Activated T-helper 1 cell treated with anti-CD3 and anti-CD28 coated beads, Interleukin-12 subunit alpha, Interleukin-12 subunit beta, Interleukin-2, Interleukin-4 antibody, amounts not matched to agents 30 ng/mL and 10 ng/mL and 1 ng/mL, durations not matched to agents 14 hours and 24 hours and 36 hours (primary cell): ENCODE measurements at regions of chr11 and their contacts with region 1.

Region 1: GRCh38 chr11:46616998-46617675 is at the starts of genes ATG13 and HARBI1:
- DNase-seq: peak; percentile 91
- H3K4me3 Mint-ChIP-seq: peak within 1 kb of the TSS; percentile 89
- H3K27ac Mint-ChIP-seq: peak within 1 kb of the TSS; percentile 100
- H3K4me1 Mint-ChIP-seq: peaks cover 46% of the 10 kb centered on the region
- H3K27me3 Mint-ChIP-seq: no peaks in the 10 kb centered on the region
- total RNA-seq, gene ATG13: 66.4 and 73.8 TPM in 2 replicates
- total RNA-seq, gene HARBI1: 4.5 and 5.3 TPM in 2 replicates

Region 2: DNA sequence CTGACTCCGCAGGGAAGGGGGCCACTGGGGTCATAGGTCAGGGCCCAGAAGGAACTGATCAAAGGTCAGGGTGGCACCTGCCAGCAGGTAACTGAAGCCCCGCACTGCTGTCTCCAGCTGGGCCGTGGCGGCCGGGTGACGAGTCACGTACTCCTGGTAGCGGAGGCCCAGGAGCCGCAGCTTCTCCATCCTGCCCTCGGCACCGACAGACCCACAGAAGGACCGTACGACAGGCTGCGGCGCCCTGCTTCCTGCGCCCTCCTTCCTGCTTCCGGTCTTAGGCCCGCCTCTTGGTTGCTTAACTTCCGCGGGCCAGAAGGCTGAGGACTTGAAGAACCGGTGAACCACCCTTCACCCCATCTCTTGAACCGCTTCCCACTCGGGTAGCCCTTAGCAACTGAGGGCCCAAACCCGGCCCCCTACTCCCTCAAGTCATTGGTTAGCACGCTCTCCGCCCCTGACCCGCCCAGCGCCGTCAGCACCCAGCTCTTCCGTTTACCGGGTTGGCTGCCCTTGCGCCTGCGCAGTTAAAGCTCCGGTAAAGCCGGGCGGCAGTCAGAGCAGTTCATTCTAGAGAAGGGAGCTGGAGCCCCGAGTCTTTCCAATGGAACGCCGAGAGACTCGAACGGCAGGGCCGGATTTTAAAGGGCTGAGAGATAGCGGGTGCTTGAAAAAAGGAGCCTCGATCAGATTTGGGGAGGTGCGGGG is 699.4 kb before region 1 on chr11 and contains the start of gene PEX16:
- intact Hi-C with region 1: loop called (anchors 2 kb)
- DNase-seq: peak; percentile 97
- H3K4me3 Mint-ChIP-seq: peak within 1 kb of the TSS; percentile 98
- H3K27ac Mint-ChIP-seq: peak within 1 kb of the TSS; percentile 92
- H3K4me1 Mint-ChIP-seq: peaks cover 22% of the 10 kb centered on the region
- H3K27me3 Mint-ChIP-seq: peaks cover 10% of the 10 kb centered on the region
- total RNA-seq, gene PEX16: 37.4 and 44.6 TPM in 2 replicates

Region 3: GRCh38 chr11:46346886-46347636 is 270.1 kb before region 1 on chr11 and contains the start of gene DGKZ:
- intact Hi-C with region 1: loop called (anchors 2 kb)
- DNase-seq: peak; percentile 91
- H3K4me3 Mint-ChIP-seq: peak within 1 kb of the TSS; percentile 88
- H3K27ac Mint-ChIP-seq: peak within 1 kb of the TSS; percentile 89
- H3K4me1 Mint-ChIP-seq: peaks cover 72% of the 10 kb centered on the region
- H3K27me3 Mint-ChIP-seq: peaks cover 3% of the 10 kb centered on the region
- total RNA-seq, gene DGKZ: 101 TPM in 2 replicates

Region 4: GRCh38 chr11:46554205-46555055 is 62.7 kb before region 1 on chr11:
- intact Hi-C with region 1: loop called (anchors 2 kb)
- DNase-seq: no peak
- H3K4me3 Mint-ChIP-seq: peak overlapping the region; percentile 13
- H3K27ac Mint-ChIP-seq: peak overlapping the region; percentile 55
- H3K4me1 Mint-ChIP-seq: peaks cover 44% of the 10 kb centered on the region
- H3K27me3 Mint-ChIP-seq: no peaks in the 10 kb centered on the region

Region 5: GRCh38 chr11:46700241-46701077 is 83.3 kb after region 1 on chr11 and contains the starts of genes ARHGAP1 and ZNF408:
- intact Hi-C with region 1: loop called (anchors 1 kb)
- DNase-seq: peak; percentile 98
- H3K4me3 Mint-ChIP-seq: peak within 1 kb of the TSS; percentile 99
- H3K27ac Mint-ChIP-seq: peak within 1 kb of the TSS; percentile 95
- H3K4me1 Mint-ChIP-seq: peaks cover 48% of the 10 kb centered on the region
- H3K27me3 Mint-ChIP-seq: peaks cover 2% of the 10 kb centered on the region
- total RNA-seq, gene ARHGAP1: 69.8 and 71.7 TPM in 2 replicates
- total RNA-seq, gene ZNF408: 12.9 and 13.9 TPM in 2 replicates

Region 6: DNA sequence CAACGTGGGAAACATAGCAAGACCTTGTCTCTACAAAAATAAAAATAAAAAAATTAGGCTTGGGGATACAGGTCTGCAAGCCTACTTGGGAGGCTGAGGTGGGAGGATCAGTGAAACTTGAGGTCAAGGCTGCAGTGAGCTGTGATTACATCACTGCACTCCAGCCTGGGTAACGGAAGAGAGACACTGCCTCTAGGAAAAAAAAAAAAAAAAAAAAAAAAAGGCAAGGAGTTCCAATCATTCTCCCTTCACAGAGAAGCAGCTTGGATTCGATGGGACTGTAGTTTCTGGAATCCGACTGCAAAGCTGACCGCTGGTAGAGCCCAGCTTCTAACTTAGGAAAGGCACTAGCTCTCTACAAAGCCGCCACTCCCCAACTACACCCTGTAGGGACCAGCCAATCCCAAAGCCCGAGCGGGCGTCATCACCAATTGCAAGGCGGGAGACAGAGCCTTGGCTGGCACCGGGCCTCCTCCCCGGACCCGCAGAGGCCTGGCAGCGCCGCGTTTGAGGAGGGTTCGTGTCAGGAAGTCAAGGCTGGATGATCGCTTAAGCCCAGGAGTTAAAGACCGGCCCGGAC is 596.9 kb after region 1 on chr11:
- intact Hi-C with region 1: loop called (anchors 2 kb)
- DNase-seq: peak; percentile 77
- H3K4me3 Mint-ChIP-seq: peak overlapping the region; percentile 96
- H3K27ac Mint-ChIP-seq: peak overlapping the region; percentile 100
- H3K4me1 Mint-ChIP-seq: peaks cover 45% of the 10 kb centered on the region
- H3K27me3 Mint-ChIP-seq: peaks cover 2% of the 10 kb centered on the region